ENCODE measurements at regions of chr1 and their contacts with region 1.

Region 1: DNA sequence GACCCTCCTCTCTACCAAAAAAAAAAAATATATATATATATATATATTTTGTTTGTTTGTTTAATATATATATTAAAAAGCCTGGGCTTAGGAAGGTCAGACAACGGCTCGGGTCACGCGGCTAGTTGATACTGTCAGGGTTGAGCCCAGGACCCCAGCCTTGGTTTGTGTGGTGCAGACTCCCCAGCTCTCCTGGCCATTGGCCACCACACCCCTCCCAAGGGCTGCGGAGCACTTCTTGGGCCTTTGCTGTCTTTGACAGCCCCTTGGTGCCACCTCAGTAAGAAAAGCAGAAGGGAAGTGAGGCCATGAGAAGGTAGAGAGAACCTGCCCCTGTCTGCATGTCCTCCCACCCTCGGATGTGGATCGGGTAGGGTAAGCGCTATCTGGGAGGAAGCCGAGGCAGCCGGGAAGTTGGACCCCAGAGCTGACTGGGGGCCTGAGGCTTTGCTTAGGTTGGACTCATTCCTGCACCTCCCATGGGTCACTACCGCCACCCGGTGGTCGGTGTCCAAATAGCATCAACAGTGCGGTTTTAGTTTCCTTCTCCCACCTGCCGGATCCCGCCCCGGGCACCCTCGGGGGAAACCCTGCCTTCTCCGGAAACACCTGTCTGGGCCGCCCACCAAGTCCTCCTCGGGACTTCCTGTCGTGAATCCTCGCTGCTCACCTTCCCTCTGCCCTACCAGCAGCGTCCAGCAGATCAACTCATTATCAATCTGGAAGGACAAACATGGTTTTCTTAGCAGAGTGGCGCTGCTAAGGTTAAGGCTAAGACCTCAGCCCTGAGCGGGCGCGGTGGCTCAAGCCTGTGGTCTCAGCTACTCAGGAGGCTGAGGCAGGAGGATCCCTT is 29.8 kb upstream of the GNPAT start:
- DNase-seq: peak; percentile 85
- H3K4me3 ChIP-seq: peak overlapping the region; percentile 49
- H3K27ac ChIP-seq: peak overlapping the region; percentile 52
- H3K4me1 ChIP-seq: no peaks in the 10 kb centered on the region
- H3K27me3 ChIP-seq: no peaks in the 10 kb centered on the region
- CTCF ChIP-seq: peak; percentile 93

Region 2: GRCh38 chr1:230642263-230642959 is 568.8 kb before region 1 on chr1 and contains the start of gene COG2:
- CTCF ChIA-PET with region 1: no interaction called
- POLR2A ChIA-PET with region 1: no interaction called
- intact Hi-C with region 1: loop called (anchors 2 kb)
- DNase-seq: peak; percentile 96
- H3K4me3 ChIP-seq: peak within 1 kb of the TSS; percentile 89
- H3K27ac ChIP-seq: peak within 1 kb of the TSS; percentile 73
- H3K4me1 ChIP-seq: peaks cover 3% of the 10 kb centered on the region
- H3K27me3 ChIP-seq: peaks cover 24% of the 10 kb centered on the region
- CTCF ChIP-seq: peak; percentile 98
- total RNA-seq, gene COG2: 20.3 and 26.6 TPM in 2 replicates

Region 3: GRCh38 chr1:230797942-230798418 is 413.3 kb before region 1 on chr1:
- CTCF ChIA-PET with region 1: interaction called, 6 read pairs
- POLR2A ChIA-PET with region 1: no interaction called
- intact Hi-C with region 1: loop called (anchors 1 kb)
- DNase-seq: peak; percentile 66
- H3K4me3 ChIP-seq: no peak overlapping the region
- H3K27ac ChIP-seq: no peak overlapping the region
- H3K4me1 ChIP-seq: no peaks in the 10 kb centered on the region
- H3K27me3 ChIP-seq: no peaks in the 10 kb centered on the region
- CTCF ChIP-seq: peak; percentile 70

Region 4: GRCh38 chr1:230917284-230918135 is 293.7 kb before region 1 on chr1:
- CTCF ChIA-PET with region 1: interaction called, 5 read pairs
- POLR2A ChIA-PET with region 1: no interaction called
- intact Hi-C with region 1: loop called (anchors 1 kb)
- DNase-seq: peak; percentile 86
- H3K4me3 ChIP-seq: no peak overlapping the region
- H3K27ac ChIP-seq: no peak overlapping the region
- H3K4me1 ChIP-seq: peaks cover 10% of the 10 kb centered on the region
- H3K27me3 ChIP-seq: no peaks in the 10 kb centered on the region
- CTCF ChIP-seq: peak; percentile 84

Region 5: DNA sequence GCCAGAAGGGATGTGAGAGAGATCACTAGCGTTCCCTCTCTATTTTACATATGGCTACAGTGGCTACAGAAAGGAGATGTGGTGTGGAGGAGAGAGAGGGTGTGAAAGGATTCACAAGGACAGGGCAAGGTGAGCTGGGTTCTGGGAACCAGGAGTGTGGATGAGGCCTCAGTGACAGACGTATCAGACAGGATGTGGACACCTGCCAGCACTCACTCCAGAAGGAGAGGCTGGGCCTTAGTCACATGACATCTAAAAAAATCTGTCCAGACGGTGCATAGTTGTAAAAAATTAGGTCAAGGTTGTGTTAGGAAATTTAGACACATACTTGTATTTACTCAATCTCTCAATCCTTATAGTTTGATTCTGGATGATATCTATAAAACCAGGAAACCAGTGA is 38.8 kb before region 1 on chr1:
- CTCF ChIA-PET with region 1: no interaction called
- POLR2A ChIA-PET with region 1: no interaction called
- intact Hi-C with region 1: no loop called
- DNase-seq: no peak
- H3K4me3 ChIP-seq: no peak overlapping the region
- H3K27ac ChIP-seq: no peak overlapping the region
- H3K4me1 ChIP-seq: no peaks in the 10 kb centered on the region
- H3K27me3 ChIP-seq: peaks cover 40% of the 10 kb centered on the region
- CTCF ChIP-seq: no peak

Measured in A673 (cell line).